ENCODE measurements at regions of chr19 and their contacts with region 1.

Region 1: GRCh38 chr19:18588611-18589379 is at the start of gene REX1BD:
- DNase-seq: peak; percentile 94
- H3K4me3 ChIP-seq: peak within 1 kb of the TSS; percentile 78 to 93 (median 85)
- H3K27ac ChIP-seq: peak within 1 kb of the TSS; percentile 86 to 93 (median 90)
- H3K4me1 ChIP-seq: peaks cover 0 to 34% (median 25%) of the 10 kb centered on the region in 4 donors
- H3K27me3 ChIP-seq: no peaks in the 10 kb centered on the region
- CTCF ChIP-seq: peak; percentile 69 to 88 (median 76)
- EP300 ChIP-seq: no peak
- POLR2A ChIP-seq: no peak
- total RNA-seq, gene REX1BD: 70.3 to 101 (median 85.6) TPM

Region 2: GRCh38 chr19:18456974-18457373 is 131.8 kb before region 1 on chr19:
- intact Hi-C with region 1: loop called (anchors 5 kb)
- DNase-seq: peak; percentile 93
- H3K4me3 ChIP-seq: no peak overlapping the region
- H3K27ac ChIP-seq: peak overlapping the region; percentile 67 to 92 (median 87)
- H3K4me1 ChIP-seq: peaks cover 0 to 58% (median 49%) of the 10 kb centered on the region in 4 donors
- H3K27me3 ChIP-seq: no peaks in the 10 kb centered on the region
- CTCF ChIP-seq: no peak
- EP300 ChIP-seq: no peak
- POLR2A ChIP-seq: no peak

Region 3: DNA sequence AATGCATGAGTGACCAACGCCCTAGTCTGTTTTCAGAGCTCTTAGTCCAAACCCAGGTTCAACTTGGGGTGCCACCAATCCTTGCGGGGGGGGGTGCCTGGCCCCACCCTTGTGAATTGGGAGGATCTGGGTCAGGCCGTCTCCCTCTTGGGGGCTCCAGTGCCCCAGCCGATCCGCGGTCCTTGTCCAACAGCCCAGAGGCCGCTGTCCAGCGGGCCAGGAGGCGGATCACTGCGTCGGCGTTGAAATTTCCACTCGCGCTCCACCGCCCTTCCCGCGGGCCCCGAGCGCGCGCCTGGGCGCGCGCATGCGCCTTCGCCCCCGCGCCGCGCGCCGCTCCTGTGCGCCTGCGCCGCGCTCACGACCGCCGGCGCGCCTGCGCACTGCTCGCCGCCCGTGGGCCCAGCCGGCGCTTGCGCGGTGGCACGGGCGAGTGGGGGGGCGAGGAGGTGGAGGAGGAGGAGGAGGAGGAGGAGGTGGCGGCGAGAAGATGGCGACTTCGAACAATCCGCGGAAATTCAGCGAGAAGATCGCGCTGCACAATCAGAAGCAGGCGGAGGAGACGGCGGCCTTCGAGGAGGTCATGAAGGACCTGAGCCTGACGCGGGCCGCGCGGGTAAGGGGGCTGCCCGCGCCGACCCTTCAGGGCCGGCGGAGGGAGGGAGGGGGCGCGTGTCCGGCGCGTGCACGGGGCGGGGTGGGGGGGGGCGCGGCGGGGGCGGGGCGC is 94.6 kb after region 1 on chr19 and contains the start of gene CRTC1:
- intact Hi-C with region 1: loop called (anchors 5 kb)
- DNase-seq: peak; percentile 94
- H3K4me3 ChIP-seq: peak within 1 kb of the TSS; percentile 56 to 60 (median 57)
- H3K27ac ChIP-seq: peak within 1 kb of the TSS; percentile 83 to 87 (median 84)
- H3K4me1 ChIP-seq: peaks cover 0 to 23% (median 20%) of the 10 kb centered on the region in 4 donors
- H3K27me3 ChIP-seq: no peaks in the 10 kb centered on the region
- CTCF ChIP-seq: no peak
- EP300 ChIP-seq: no peak
- POLR2A ChIP-seq: peak in 1 of 2 donors; percentile 28
- total RNA-seq, gene CRTC1: 2.5 to 7.2 (median 4.6) TPM

Region 4: DNA sequence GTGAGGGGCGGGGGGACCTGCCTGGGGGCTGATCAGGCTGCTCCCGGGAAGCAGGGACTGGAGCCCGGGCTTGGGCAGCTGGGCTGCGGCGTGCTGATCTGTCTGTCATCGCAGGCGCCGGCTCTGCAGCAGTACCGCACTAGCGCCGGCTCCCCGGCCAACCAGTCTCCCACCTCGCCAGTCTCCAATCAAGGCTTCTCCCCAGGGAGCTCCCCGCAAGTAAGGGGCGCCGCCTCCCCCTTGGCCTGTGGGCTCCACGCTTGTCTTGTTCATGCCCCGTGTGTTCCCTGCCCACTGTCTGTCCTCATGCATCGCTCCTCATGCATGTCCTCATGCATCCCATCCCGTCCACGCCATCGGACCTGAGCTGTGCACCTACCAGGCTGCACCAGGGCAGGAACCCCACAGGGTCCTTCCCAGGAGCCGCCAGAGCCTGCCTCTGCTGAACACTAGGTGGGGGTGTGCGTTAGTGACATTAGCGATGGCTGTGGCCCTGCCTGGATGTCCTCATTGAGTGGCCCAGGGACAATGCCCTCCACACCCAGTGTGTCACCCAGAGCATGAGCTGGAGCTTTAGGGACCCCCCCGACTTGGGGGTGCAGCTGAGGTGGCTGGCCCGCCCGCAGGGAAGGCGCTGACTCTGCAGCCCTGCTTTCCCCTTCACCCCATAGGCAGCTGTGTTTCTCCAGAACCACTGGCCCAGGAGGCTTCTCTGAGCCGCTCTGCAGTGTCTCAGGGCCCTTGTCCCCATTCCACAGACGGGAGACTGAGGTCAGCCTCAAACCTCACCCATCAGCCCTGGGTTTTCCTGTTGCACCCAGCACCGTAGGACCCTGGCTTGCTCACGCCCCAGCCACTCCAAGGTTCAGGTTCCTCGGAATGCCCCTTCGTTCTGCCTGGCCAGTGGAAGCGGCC is 182.8 kb after region 1 on chr19:
- intact Hi-C with region 1: no loop called
- DNase-seq: no peak
- H3K4me3 ChIP-seq: no peak overlapping the region
- H3K27ac ChIP-seq: no peak overlapping the region
- H3K4me1 ChIP-seq: no peaks in the 10 kb centered on the region
- H3K27me3 ChIP-seq: no peaks in the 10 kb centered on the region
- CTCF ChIP-seq: no peak
- EP300 ChIP-seq: no peak
- POLR2A ChIP-seq: no peak

Region 5: GRCh38 chr19:18831524-18832305 is 242.9 kb after region 1 on chr19 and contains the start of gene UPF1:
- intact Hi-C with region 1: loop called (anchors 5 kb)
- DNase-seq: peak; percentile 95
- H3K4me3 ChIP-seq: peak within 1 kb of the TSS; percentile 68 to 97 (median 86)
- H3K27ac ChIP-seq: peak within 1 kb of the TSS; percentile 86 to 91 (median 88)
- H3K4me1 ChIP-seq: peaks cover 0 to 45% (median 35%) of the 10 kb centered on the region in 4 donors
- H3K27me3 ChIP-seq: no peaks in the 10 kb centered on the region
- CTCF ChIP-seq: no peak
- EP300 ChIP-seq: no peak
- POLR2A ChIP-seq: no peak
- total RNA-seq, gene UPF1: 48.4 to 55.3 (median 49.0) TPM

Measured in sigmoid colon (tissue), 7 donors.